MCF 10A (cell line): ENCODE measurements at regions of chr1 and their contacts with region 1.

Region 1: GRCh38 chr1:89632657-89633247 is at the start of gene LRRC8C:
- DNase-seq: peak; percentile 59
- H3K4me3 Mint-ChIP-seq: peak within 1 kb of the TSS; percentile 85
- H3K27ac Mint-ChIP-seq: peak within 1 kb of the TSS; percentile 57
- H3K4me1 Mint-ChIP-seq: peaks cover 18% of the 10 kb centered on the region
- H3K27me3 Mint-ChIP-seq: no peaks in the 10 kb centered on the region
- CTCF ChIP-seq: peak; percentile 40
- total RNA-seq, gene LRRC8C: 4.4 TPM in 2 replicates

Region 2: DNA sequence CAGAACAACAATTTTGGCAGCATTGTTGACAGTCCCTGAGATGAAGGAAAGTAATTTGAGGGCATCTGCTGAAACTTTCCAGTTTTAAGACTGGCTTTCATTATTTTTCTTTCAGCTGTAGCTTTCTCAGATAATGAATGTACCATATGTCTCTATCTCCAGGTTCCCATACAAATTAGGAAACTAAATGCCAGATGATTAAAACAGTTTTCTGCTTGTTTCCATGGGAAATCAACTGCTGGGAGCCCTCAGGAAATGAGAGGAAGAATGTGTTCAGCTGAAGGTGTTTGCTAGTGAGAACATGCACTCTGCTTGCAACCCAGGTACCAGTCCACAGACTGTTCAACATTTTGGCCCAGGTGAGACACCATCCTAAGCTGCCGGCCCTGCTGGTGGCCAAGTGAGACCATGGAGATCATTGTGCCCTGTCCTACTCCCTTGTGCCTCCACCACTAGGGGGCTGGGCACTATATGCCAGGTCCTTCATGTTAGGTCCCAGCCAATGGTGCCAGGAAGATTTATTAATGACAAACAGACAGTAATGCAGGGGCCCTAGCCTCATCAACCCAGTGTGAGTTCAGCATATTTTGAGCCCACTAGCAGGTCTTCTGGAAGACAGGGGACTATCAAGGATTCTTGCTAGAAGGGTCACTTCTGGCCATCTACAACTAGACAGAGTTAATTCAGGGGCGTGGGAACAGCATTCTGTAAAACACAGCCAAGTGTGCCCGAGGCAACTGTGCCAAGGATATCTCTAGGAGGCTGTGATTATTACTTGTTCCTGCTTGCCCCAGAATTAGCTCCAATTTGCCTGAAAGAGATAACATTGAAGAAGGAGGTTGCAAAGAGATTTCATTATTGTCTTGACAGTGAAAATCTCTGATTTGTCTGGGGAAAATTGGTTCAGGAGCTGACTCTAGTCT is 16.8 kb before region 1 on chr1:
- CTCF ChIA-PET with region 1: interaction called, 10 read pairs
- POLR2A ChIA-PET with region 1: interaction called, 11 read pairs
- intact Hi-C with region 1: no loop called
- DNase-seq: peak; percentile 44
- H3K4me3 Mint-ChIP-seq: no peak overlapping the region
- H3K27ac Mint-ChIP-seq: peak overlapping the region; percentile 66
- H3K4me1 Mint-ChIP-seq: peaks cover 15% of the 10 kb centered on the region
- H3K27me3 Mint-ChIP-seq: no peaks in the 10 kb centered on the region
- CTCF ChIP-seq: peak; percentile 17

Region 3: GRCh38 chr1:89643577-89643976 is 10.8 kb after region 1 on chr1:
- CTCF ChIA-PET with region 1: interaction called, 10 read pairs
- POLR2A ChIA-PET with region 1: interaction called, 4 read pairs
- intact Hi-C with region 1: no loop called
- DNase-seq: no peak
- H3K4me3 Mint-ChIP-seq: no peak overlapping the region
- H3K27ac Mint-ChIP-seq: no peak overlapping the region
- H3K4me1 Mint-ChIP-seq: no peaks in the 10 kb centered on the region
- H3K27me3 Mint-ChIP-seq: no peaks in the 10 kb centered on the region
- CTCF ChIP-seq: no peak

Region 4: GRCh38 chr1:90067194-90067931 is 434.6 kb after region 1 on chr1:
- CTCF ChIA-PET with region 1: no interaction called
- POLR2A ChIA-PET with region 1: no interaction called
- intact Hi-C with region 1: no loop called
- DNase-seq: no peak
- H3K4me3 Mint-ChIP-seq: no peak overlapping the region
- H3K27ac Mint-ChIP-seq: no peak overlapping the region
- H3K4me1 Mint-ChIP-seq: no peaks in the 10 kb centered on the region
- H3K27me3 Mint-ChIP-seq: peaks cover 64% of the 10 kb centered on the region
- CTCF ChIP-seq: no peak